Ascending aorta (tissue), 2 donors: ENCODE measurements at regions of chr10 and their contacts with region 1.

Region 1: GRCh38 chr10:62426086-62426485 is 51.9 kb downstream of the ZNF365 start:
- DNase-seq: no peak
- H3K4me3 ChIP-seq: no peak overlapping the region
- H3K27ac ChIP-seq: no peak overlapping the region
- H3K4me1 ChIP-seq: no peaks in the 10 kb centered on the region
- H3K27me3 ChIP-seq: no peaks in the 10 kb centered on the region
- CTCF ChIP-seq: no peak

Region 2: GRCh38 chr10:62384057-62384446 is 42.0 kb before region 1 on chr10:
- intact Hi-C with region 1: loop called (anchors 5 kb)
- DNase-seq: no peak
- H3K4me3 ChIP-seq: no peak overlapping the region
- H3K27ac ChIP-seq: no peak overlapping the region
- H3K4me1 ChIP-seq: peaks cover 0 to 18% of the 10 kb centered on the region in 2 donors
- H3K27me3 ChIP-seq: no peaks in the 10 kb centered on the region
- CTCF ChIP-seq: no peak

Region 3: DNA sequence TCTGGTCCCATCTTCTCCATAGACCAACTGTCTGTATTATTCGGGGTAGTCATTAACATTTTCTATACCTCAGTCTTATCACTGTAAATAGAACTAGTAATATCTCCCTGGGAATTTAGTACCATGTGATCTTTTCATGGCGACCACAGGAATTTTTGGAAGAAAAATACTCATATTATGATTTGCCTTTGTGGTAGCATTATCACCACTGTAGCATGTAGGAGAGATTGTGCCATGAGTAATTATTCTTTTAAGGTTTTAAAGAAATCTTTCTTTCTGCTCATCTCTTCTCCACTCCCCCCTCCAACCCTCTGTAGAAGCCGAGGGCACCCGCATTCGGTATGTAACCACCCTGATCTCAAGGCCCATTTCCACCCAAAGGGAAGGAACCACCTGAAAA is 26.9 kb before region 1 on chr10:
- intact Hi-C with region 1: no loop called
- DNase-seq: no peak
- H3K4me3 ChIP-seq: no peak overlapping the region
- H3K27ac ChIP-seq: no peak overlapping the region
- H3K4me1 ChIP-seq: no peaks in the 10 kb centered on the region
- H3K27me3 ChIP-seq: no peaks in the 10 kb centered on the region
- CTCF ChIP-seq: no peak

Region 4: GRCh38 chr10:62471711-62472110 is 45.6 kb after region 1 on chr10:
- intact Hi-C with region 1: no loop called
- DNase-seq: no peak
- H3K4me3 ChIP-seq: no peak overlapping the region
- H3K27ac ChIP-seq: no peak overlapping the region
- H3K4me1 ChIP-seq: no peaks in the 10 kb centered on the region
- H3K27me3 ChIP-seq: no peaks in the 10 kb centered on the region
- CTCF ChIP-seq: no peak